Spleen (tissue), 13 donors: ENCODE measurements at regions of chr1 and their contacts with region 1.

Region 1: GRCh38 chr1:117605774-117606648 is at the start of gene TENT5C:
- DNase-seq: peak; percentile 99
- H3K4me3 ChIP-seq: peak within 1 kb of the TSS; percentile 56 to 93 (median 82)
- H3K27ac ChIP-seq: peak within 1 kb of the TSS; percentile 75 to 96 (median 88)
- H3K4me1 ChIP-seq: peaks cover 17 to 57% (median 44%) of the 10 kb centered on the region in 6 donors
- H3K27me3 ChIP-seq: no peaks in the 10 kb centered on the region
- CTCF ChIP-seq: peak in 3 of 11 experiments; percentile 4 to 11 (median 6)
- POLR2A ChIP-seq: peak; percentile 83 to 92 (median 88)
- total RNA-seq, gene TENT5C: 32.0 to 181 (median 39.5) TPM

Region 2: GRCh38 chr1:117416546-117417125 is 189.4 kb before region 1 on chr1:
- intact Hi-C with region 1: no loop called
- DNase-seq: no peak
- H3K4me3 ChIP-seq: no peak overlapping the region
- H3K27ac ChIP-seq: no peak overlapping the region
- H3K4me1 ChIP-seq: no peaks in the 10 kb centered on the region
- H3K27me3 ChIP-seq: no peaks in the 10 kb centered on the region
- CTCF ChIP-seq: no peak
- POLR2A ChIP-seq: no peak

Region 3: GRCh38 chr1:117674521-117675397 is 68.7 kb after region 1 on chr1:
- intact Hi-C with region 1: loop called (anchors 5 kb)
- DNase-seq: no peak
- H3K4me3 ChIP-seq: no peak overlapping the region
- H3K27ac ChIP-seq: peak overlapping the region in 1 of 8 donors; percentile 15
- H3K4me1 ChIP-seq: peaks cover 0 to 38% (median 24%) of the 10 kb centered on the region in 6 donors
- H3K27me3 ChIP-seq: no peaks in the 10 kb centered on the region
- CTCF ChIP-seq: peak; percentile 19 to 71 (median 57)
- POLR2A ChIP-seq: no peak